Tibial artery (tissue), 4 donors: ENCODE measurements at regions of chr17 and their contacts with region 1.

Region 1: GRCh38 chr17:35969558-35970380 is 11.5 kb downstream of the CCL16 start:
- DNase-seq: peak; percentile 72 to 79
- H3K4me3 ChIP-seq: no peak overlapping the region
- H3K27ac ChIP-seq: no peak overlapping the region
- H3K4me1 ChIP-seq: no peaks in the 10 kb centered on the region
- H3K27me3 ChIP-seq: no peaks in the 10 kb centered on the region
- CTCF ChIP-seq: peak; percentile 73 to 74

Region 2: DNA sequence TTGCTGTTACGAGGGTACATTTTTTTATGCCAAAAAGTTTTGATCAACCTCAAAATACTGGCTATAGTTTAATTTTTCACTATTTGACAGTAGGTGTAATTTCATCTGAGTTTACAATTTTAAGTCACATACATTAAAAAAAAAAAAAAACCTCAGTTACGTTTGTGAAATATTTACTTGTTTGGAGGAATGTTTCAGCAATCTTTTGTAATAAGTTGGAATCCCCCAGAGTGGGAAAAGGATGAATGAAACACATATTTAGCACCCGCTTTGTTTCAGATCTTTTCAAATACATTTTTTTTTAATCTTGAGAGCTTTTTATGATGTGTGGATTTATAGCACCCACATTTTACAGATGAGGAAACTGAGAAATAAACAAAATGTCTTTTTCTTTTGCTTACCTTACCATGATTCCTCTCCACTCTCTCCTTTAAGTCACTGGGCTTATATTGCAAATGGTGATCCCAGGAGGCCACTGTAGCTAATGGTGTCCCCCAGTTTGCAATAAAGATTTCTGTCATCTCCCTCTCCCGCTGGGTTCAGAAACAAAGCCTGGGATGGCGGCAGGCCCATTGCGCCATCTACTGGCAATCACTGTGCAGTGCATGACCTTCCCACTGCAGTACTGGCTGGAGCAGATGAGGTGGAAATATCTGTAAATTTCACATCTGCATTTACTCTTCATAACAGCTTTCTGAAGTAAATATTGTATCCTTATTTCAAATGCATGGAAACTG is 179.0 kb after region 1 on chr17:
- intact Hi-C with region 1: loop called (anchors 10 kb)
- DNase-seq: peak; percentile 79 to 80
- H3K4me3 ChIP-seq: peak overlapping the region in 1 of 2 donors; percentile 21
- H3K27ac ChIP-seq: peak overlapping the region; percentile 16 to 44
- H3K4me1 ChIP-seq: peaks cover 0 to 14% (median 10%) of the 10 kb centered on the region in 4 donors
- H3K27me3 ChIP-seq: peaks cover 0 to 7% of the 10 kb centered on the region in 2 donors
- CTCF ChIP-seq: peak; percentile 99 to 100

Region 3: DNA sequence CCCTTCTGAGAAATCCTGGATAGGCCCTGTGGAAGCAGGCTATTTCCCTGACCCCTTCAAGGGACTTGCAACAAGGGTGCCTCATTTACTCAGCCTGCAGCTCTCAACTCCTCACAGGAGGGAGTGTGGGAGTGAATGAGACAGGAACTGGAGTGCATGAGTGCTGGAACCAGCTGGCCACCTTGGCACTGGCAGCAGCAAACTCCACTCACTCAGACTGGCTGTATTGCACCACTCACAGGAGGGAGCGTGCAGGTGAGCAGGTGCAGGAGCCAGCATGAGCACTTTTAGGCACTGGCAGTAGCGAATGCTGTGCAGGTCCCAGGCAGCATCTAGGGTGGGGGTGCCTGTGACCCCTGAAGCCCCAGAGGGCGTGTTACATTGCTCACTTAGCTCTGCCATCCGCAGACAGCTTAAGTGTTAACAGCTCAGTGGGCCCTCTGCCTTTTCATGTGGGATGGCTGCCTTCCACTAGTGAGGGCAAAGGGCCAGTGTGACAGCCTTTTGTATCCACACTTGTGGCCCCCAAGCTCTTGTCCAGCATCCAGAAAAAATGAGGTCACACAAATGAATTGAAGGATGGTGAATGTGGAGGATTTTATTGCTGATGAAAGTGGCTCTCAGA is 505.7 kb after region 1 on chr17:
- intact Hi-C with region 1: loop called (anchors 10 kb)
- DNase-seq: no peak
- H3K4me3 ChIP-seq: no peak overlapping the region
- H3K27ac ChIP-seq: no peak overlapping the region
- H3K4me1 ChIP-seq: no peaks in the 10 kb centered on the region
- H3K27me3 ChIP-seq: peaks cover 0 to 17% of the 10 kb centered on the region in 2 donors
- CTCF ChIP-seq: no peak